ENCODE measurements at regions of chr10 and their contacts with region 1.

Region 1: GRCh38 chr10:31851216-31851615 is 77.4 kb downstream of the ARHGAP12 start:
- DNase-seq: no peak
- ATAC-seq: no peak
- H3K4me3 ChIP-seq: no peak overlapping the region
- H3K27ac ChIP-seq: no peak overlapping the region
- H3K4me1 ChIP-seq: peaks cover 4 to 10% of the 10 kb centered on the region in 2 donors
- H3K27me3 ChIP-seq: no peaks in the 10 kb centered on the region
- CTCF ChIP-seq: no peak
- POLR2A ChIP-seq: no peak

Region 2: GRCh38 chr10:31656851-31657433 is 194.3 kb before region 1 on chr10:
- in situ Hi-C with region 1: no loop called
- intact Hi-C with region 1: no loop called
- DNase-seq: no peak
- ATAC-seq: peak; percentile 44 to 50
- H3K4me3 ChIP-seq: no peak overlapping the region
- H3K27ac ChIP-seq: peak overlapping the region; percentile 2 to 51 (median 42)
- H3K4me1 ChIP-seq: no peaks in the 10 kb centered on the region
- H3K27me3 ChIP-seq: no peaks in the 10 kb centered on the region
- CTCF ChIP-seq: no peak
- POLR2A ChIP-seq: no peak

Region 3: GRCh38 chr10:32005050-32005449 is 153.8 kb after region 1 on chr10:
- in situ Hi-C with region 1: loop called in 2 of 4 experiments (anchors 10 to 25 kb)
- intact Hi-C with region 1: no loop called
- DNase-seq: no peak
- ATAC-seq: peak; percentile 48 to 65
- H3K4me3 ChIP-seq: no peak overlapping the region
- H3K27ac ChIP-seq: no peak overlapping the region
- H3K4me1 ChIP-seq: peaks cover 12 to 15% of the 10 kb centered on the region in 2 donors
- H3K27me3 ChIP-seq: no peaks in the 10 kb centered on the region
- CTCF ChIP-seq: peak; percentile 24 to 55 (median 36)
- POLR2A ChIP-seq: no peak